Head of caudate nucleus (tissue), 42 donors: ENCODE measurements at regions of chr14 and their contacts with region 1.

Region 1: DNA sequence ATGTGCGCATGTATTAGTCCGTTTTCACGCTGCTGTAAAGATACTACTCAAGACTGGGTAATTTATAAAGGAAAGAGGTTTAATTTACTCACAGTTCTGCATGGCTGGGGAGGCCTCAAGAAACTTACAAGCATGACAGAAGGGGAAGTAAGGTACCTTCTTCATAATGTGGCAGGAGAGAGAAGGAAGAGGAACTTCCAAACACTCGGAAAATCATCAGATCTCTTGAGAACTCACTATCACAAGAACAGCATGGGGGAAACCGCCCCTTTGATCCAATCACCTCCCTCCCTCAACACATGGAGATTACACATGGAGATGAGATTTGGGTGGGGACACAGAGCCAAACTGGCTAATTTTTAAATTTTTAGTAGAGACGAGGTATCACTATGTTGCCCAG is 41.8 kb upstream of the SNX6 start:
- DNase-seq: no peak

Region 2: DNA sequence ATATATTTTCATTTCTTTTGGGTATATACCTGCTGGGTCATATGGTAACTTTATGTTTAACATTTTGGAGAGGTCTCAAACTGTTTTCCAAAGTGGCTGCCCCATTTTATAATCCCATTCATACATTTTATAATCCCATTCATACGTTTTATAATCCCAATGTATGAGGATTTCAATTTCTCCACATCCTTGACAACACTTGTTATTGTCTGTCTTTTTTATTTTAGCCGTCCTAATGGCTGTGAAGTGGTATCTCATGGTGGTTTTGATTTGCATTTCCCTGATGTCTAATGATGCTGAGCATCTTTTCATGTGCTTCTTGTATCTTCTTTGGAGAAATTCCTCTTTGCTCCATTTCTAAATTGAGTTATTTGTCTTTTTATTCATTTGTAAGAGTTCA is 49.4 kb after region 1 on chr14:
- intact Hi-C with region 1: loop called (anchors 2 kb)
- DNase-seq: no peak

Region 3: DNA sequence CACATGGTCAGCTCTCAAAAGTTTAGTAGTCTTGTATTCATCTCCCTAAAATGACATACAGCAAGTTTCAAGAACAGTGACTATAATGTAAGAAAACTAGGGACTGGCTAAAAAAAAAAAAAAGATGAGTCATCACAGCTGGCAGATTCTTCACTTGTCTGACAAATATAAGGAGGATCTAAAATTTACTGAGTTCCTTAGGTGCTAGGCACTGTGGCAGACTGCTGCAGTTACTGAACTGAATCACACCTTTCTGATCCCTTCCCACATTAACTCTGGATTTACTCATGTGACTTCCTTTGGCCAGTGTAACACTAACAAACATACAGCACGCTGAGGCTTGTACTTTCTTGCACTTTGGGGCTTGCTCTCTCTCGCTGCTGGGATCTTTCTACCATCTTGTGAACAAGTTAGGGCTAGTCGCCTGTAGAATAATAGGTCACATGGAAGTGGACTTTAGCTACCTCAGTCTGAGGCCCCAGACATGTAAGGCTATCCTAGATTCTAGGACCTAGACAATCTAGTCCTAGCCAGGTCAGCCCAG is 171.4 kb after region 1 on chr14:
- intact Hi-C with region 1: no loop called
- DNase-seq: peak in 6 of 42 donors; percentile 2 to 26 (median 9)